Keratinocyte (primary cell): ENCODE measurements at regions of chr3 and their contacts with region 1.

Region 1: GRCh38 chr3:45656575-45657363 is 32.4 kb upstream of the SACM1L start:
- DNase-seq: peak; percentile 81
- H3K4me3 ChIP-seq: no peak overlapping the region
- H3K27ac ChIP-seq: no peak overlapping the region
- H3K4me1 ChIP-seq: peaks cover 3% of the 10 kb centered on the region
- H3K27me3 ChIP-seq: no peaks in the 10 kb centered on the region
- CTCF ChIP-seq: peak; percentile 88 to 97 (median 97)

Region 2: GRCh38 chr3:45507820-45508317 is 148.9 kb before region 1 on chr3:
- dilution Hi-C with region 1: loop called (anchors 25 kb)
- DNase-seq: no peak
- H3K4me3 ChIP-seq: no peak overlapping the region
- H3K27ac ChIP-seq: no peak overlapping the region
- H3K4me1 ChIP-seq: peaks cover 18% of the 10 kb centered on the region
- H3K27me3 ChIP-seq: no peaks in the 10 kb centered on the region
- CTCF ChIP-seq: no peak

Region 3: GRCh38 chr3:45772341-45773035 is 115.7 kb after region 1 on chr3:
- dilution Hi-C with region 1: no loop called
- DNase-seq: no peak
- H3K4me3 ChIP-seq: no peak overlapping the region
- H3K27ac ChIP-seq: no peak overlapping the region
- H3K4me1 ChIP-seq: no peaks in the 10 kb centered on the region
- H3K27me3 ChIP-seq: peaks cover 34% of the 10 kb centered on the region
- CTCF ChIP-seq: no peak